ENCODE measurements at regions of chr4 and their contacts with region 1.

Region 1: GRCh38 chr4:113952452-113953029 is 26.9 kb downstream of the ARSJ start:
- DNase-seq: no peak
- ATAC-seq: peak; percentile 78
- H3K4me3 ChIP-seq: no peak overlapping the region
- H3K27ac ChIP-seq: no peak overlapping the region
- H3K4me1 ChIP-seq: no peaks in the 10 kb centered on the region
- H3K27me3 ChIP-seq: no peaks in the 10 kb centered on the region

Region 2: GRCh38 chr4:113761620-113762185 is 190.8 kb before region 1 on chr4 and contains the start of gene CAMK2D:
- intact Hi-C with region 1: loop called in 1 of 2 experiments (anchors 10 kb)
- DNase-seq: peak; percentile 91 to 93
- ATAC-seq: peak; percentile 90
- H3K4me3 ChIP-seq: peak within 1 kb of the TSS; percentile 51 to 77
- H3K27ac ChIP-seq: peak within 1 kb of the TSS; percentile 64 to 90
- H3K4me1 ChIP-seq: no peaks in the 10 kb centered on the region
- H3K27me3 ChIP-seq: no peaks in the 10 kb centered on the region
- total RNA-seq, gene CAMK2D: 52.3 to 71.8 TPM

Region 3: DNA sequence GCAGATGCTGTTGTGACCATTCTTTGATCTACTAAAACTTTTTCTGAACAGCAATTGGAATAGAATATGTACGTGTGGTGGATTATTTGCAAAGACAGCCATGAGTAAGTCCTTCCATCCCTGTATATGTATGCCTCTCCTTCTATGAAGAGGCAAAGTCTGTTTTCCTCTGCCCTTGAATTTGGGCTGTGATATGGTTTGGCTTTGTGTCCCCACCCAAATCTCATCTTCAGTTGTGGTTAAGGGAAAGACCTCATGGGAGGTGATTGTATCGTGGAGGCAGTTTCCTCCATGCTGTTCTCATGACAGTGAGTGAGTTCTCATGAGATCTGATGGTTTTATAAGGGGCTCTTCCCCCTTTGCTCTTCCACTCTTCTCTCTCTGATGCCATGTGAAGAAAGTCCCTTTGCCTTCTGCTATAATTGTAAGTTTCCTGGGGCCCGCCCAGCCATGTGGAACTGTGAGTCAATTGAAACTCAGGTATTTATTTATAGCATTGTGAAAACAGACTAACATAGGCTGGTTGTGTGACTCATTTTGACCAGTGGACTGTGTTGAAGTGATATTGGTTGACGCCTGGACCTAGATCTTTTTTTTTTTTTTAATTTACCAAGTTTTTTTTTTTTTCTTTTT is 82.7 kb before region 1 on chr4:
- intact Hi-C with region 1: no loop called
- DNase-seq: peak in 1 of 2 donors; percentile 57
- ATAC-seq: no peak
- H3K4me3 ChIP-seq: no peak overlapping the region
- H3K27ac ChIP-seq: no peak overlapping the region
- H3K4me1 ChIP-seq: peaks cover 0 to 3% of the 10 kb centered on the region in 2 donors
- H3K27me3 ChIP-seq: no peaks in the 10 kb centered on the region

Region 4: GRCh38 chr4:114077610-114078009 is 125.1 kb after region 1 on chr4:
- intact Hi-C with region 1: loop called (anchors 5 to 10 kb)
- DNase-seq: no peak
- ATAC-seq: no peak
- H3K4me3 ChIP-seq: no peak overlapping the region
- H3K27ac ChIP-seq: no peak overlapping the region
- H3K4me1 ChIP-seq: no peaks in the 10 kb centered on the region
- H3K27me3 ChIP-seq: no peaks in the 10 kb centered on the region

Region 5: GRCh38 chr4:114180481-114180880 is 227.9 kb after region 1 on chr4:
- intact Hi-C with region 1: loop called in 1 of 2 experiments (anchors 10 kb)
- DNase-seq: peak; percentile 72 to 75
- ATAC-seq: no peak
- H3K4me3 ChIP-seq: no peak overlapping the region
- H3K27ac ChIP-seq: no peak overlapping the region
- H3K4me1 ChIP-seq: no peaks in the 10 kb centered on the region
- H3K27me3 ChIP-seq: no peaks in the 10 kb centered on the region

Region 6: DNA sequence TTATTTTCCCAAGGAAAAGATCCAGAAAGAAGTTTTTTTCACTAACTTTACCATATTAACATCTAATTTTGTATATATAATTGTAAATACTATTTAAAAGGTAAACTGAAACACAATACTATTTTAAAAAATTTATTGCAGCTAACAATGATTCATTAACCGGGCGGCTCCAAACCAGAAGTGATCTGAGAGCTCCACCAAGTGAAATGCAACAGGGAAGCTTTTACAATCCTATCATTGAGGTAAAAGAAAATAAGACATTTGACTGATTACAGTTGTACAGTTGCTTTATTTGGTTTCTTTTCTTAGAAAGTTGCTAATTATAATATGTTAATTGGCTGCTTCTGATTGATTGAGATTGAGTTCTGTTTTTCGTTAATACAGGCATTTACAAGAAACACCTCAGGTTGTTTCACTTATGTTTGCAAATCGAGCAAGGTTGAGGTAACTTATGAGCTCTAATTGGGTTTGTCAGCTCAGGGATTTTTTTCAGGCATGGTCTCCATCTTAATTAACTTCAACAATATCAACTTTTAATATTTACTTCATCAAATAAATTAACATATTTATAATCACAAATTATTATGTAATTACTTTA is 425.9 kb after region 1 on chr4:
- intact Hi-C with region 1: loop called (anchors 10 kb)
- DNase-seq: no peak
- ATAC-seq: no peak
- H3K4me3 ChIP-seq: no peak overlapping the region
- H3K27ac ChIP-seq: no peak overlapping the region
- H3K4me1 ChIP-seq: no peaks in the 10 kb centered on the region
- H3K27me3 ChIP-seq: no peaks in the 10 kb centered on the region